ENCODE measurements at regions of chr1 and their contacts with region 1.

Region 1: DNA sequence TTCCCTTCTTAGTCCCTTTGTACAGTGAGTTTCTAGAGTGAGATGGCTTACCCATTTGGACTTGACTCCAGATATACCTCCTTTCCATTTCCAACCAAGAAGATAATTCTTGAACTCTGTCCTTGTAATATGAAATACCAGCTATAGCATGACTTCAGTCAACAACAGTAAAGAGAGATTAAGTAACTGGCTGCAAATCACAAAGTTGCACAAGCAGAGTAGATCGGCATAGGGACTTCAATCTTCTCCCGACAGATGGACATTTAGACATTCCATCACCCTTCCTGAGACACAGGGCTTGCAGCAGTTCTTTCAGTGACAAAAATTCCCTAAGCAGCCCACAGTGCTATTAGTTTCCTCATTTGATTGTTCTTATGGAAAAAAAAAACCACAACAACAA is 44.6 kb downstream of the JAK1 start:
- DNase-seq: no peak
- H3K4me3 ChIP-seq: no peak overlapping the region
- H3K27ac ChIP-seq: no peak overlapping the region
- H3K27me3 ChIP-seq: no peaks in the 10 kb centered on the region
- CTCF ChIP-seq: no peak

Region 2: DNA sequence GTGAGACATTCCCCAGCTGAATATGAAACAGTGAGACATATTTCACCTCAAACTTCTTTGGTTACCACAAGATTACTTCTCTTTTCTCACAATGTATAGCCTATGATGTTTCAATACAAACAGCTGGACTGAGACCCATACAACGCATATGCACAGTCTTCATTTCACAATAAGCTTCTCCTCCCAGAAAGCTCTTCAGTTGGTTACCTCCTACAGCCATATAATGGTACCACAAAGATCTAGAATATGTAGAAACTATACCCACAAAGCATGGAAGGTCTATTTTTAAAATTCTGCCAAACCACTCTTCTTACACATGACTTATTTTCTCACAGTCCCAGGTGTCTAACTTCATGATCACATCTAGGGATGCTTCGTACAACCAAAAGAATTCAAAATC is 26.3 kb before region 1 on chr1:
- CTCF ChIA-PET with region 1: interaction called, 3 read pairs
- POLR2A ChIA-PET with region 1: interaction called, 10 read pairs
- DNase-seq: no peak
- H3K4me3 ChIP-seq: no peak overlapping the region
- H3K27ac ChIP-seq: no peak overlapping the region
- H3K27me3 ChIP-seq: no peaks in the 10 kb centered on the region
- CTCF ChIP-seq: no peak